ENCODE measurements at regions of chr3 and their contacts with region 1.

Region 1: GRCh38 chr3:11719406-11720230 is 75.9 kb upstream of the VGLL4 start:
- DNase-seq: peak; percentile 76
- ATAC-seq: peak; percentile 69
- H3K4me3 Mint-ChIP-seq: peak overlapping the region; percentile 94
- H3K27ac Mint-ChIP-seq: no peak overlapping the region
- H3K4me1 Mint-ChIP-seq: peaks cover 21% of the 10 kb centered on the region
- H3K27me3 Mint-ChIP-seq: no peaks in the 10 kb centered on the region
- CTCF ChIP-seq: no peak

Region 2: DNA sequence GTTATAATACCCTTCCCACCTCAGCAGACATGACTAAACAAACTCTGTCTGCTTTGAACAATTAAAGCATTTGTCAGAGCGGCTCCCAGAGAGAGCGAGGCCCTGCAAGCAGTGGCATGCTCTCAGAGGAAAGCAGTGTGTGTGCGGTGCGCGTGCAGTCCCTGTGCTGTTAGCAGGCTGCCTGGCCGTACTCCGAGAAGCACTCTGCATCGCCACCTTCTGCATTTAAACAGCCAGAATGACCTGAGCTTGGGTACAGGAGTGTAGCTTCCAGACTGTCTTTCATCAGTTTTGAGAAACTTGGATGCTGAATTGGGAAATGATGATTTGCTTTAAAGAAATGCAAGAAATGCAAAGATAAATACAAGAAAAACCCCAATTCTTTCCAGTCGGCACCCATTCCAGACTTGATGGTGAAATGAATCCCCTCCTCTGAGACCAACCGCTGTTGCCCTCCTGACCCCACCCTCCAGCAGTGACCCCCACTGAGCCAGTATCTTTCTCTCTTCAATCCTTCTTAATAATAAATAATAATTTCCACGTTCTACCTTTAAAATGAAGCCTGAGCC is 189.4 kb before region 1 on chr3:
- CTCF ChIA-PET with region 1: no interaction called
- POLR2A ChIA-PET with region 1: no interaction called
- intact Hi-C with region 1: no loop called
- DNase-seq: no peak
- ATAC-seq: no peak
- H3K4me3 Mint-ChIP-seq: no peak overlapping the region
- H3K27ac Mint-ChIP-seq: no peak overlapping the region
- H3K4me1 Mint-ChIP-seq: no peaks in the 10 kb centered on the region
- H3K27me3 Mint-ChIP-seq: no peaks in the 10 kb centered on the region
- CTCF ChIP-seq: no peak

Region 3: GRCh38 chr3:11671648-11672100 is 47.9 kb before region 1 on chr3:
- CTCF ChIA-PET with region 1: no interaction called
- POLR2A ChIA-PET with region 1: no interaction called
- intact Hi-C with region 1: loop called (anchors 5 kb)
- DNase-seq: no peak
- ATAC-seq: peak; percentile 47
- H3K4me3 Mint-ChIP-seq: no peak overlapping the region
- H3K27ac Mint-ChIP-seq: no peak overlapping the region
- H3K4me1 Mint-ChIP-seq: peaks cover 22% of the 10 kb centered on the region
- H3K27me3 Mint-ChIP-seq: no peaks in the 10 kb centered on the region
- CTCF ChIP-seq: no peak

Region 4: DNA sequence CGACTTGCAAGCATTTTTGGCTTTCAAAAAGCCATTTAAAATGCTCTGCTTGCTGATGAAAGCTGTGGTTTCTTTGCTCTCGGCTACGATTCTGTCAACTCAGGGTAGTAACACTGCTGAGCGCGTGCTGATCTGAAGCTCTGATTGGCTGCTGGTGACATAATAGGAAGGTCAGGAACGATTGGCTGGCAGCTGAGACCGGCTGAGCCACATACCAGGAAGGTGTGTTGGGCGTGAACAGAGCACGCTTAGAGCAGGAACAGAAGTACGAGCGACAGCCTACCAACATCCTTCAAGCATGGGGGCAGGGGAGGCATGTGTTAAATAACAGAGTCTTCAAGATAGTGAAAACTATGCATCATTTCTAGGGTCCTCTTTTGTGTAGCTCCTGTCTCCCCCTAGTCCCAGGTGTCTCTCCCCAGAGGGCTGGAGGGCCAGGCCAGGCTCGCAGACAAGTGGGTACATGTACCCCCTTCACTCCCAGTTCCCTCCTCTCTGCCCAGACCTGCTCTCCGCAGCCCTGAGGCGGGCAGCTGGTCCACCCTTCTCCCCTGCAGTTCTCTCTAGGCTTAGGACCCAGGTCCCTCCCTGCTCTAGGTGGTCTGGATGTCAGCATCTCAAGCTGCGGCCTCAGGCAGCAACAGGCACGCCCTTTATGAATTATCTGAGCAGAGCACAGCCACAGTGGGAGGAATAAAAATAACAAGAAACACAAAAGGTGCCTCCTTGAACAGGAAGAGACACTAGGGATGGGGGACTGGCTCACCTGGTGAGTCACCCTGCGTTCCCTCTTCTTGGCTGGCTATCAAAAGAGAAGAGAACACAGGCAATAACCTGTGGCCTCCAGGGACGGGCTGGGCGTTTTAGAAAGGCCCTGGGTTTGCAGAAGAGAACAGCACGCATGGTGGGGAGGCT is 51.1 kb after region 1 on chr3:
- CTCF ChIA-PET with region 1: no interaction called
- POLR2A ChIA-PET with region 1: no interaction called
- intact Hi-C with region 1: loop called (anchors 5 kb)
- DNase-seq: peak; percentile 20
- ATAC-seq: peak; percentile 100
- H3K4me3 Mint-ChIP-seq: peak overlapping the region; percentile 21
- H3K27ac Mint-ChIP-seq: peak overlapping the region; percentile 3
- H3K4me1 Mint-ChIP-seq: peaks cover 16% of the 10 kb centered on the region
- H3K27me3 Mint-ChIP-seq: no peaks in the 10 kb centered on the region
- CTCF ChIP-seq: no peak

Region 5: GRCh38 chr3:11803977-11804892 is 84.6 kb after region 1 on chr3:
- CTCF ChIA-PET with region 1: no interaction called
- POLR2A ChIA-PET with region 1: no interaction called
- intact Hi-C with region 1: loop called (anchors 5 kb)
- DNase-seq: no peak
- ATAC-seq: peak; percentile 71
- H3K4me3 Mint-ChIP-seq: no peak overlapping the region
- H3K27ac Mint-ChIP-seq: no peak overlapping the region
- H3K4me1 Mint-ChIP-seq: no peaks in the 10 kb centered on the region
- H3K27me3 Mint-ChIP-seq: no peaks in the 10 kb centered on the region
- CTCF ChIP-seq: no peak

Region 6: GRCh38 chr3:11846281-11847034 is 126.8 kb after region 1 on chr3 and contains the start of gene TAMM41:
- CTCF ChIA-PET with region 1: no interaction called
- POLR2A ChIA-PET with region 1: no interaction called
- intact Hi-C with region 1: loop called (anchors 2 kb)
- DNase-seq: peak; percentile 77
- ATAC-seq: peak; percentile 100
- H3K4me3 Mint-ChIP-seq: peak within 1 kb of the TSS; percentile 99
- H3K27ac Mint-ChIP-seq: peak within 1 kb of the TSS; percentile 95
- H3K4me1 Mint-ChIP-seq: peaks cover 37% of the 10 kb centered on the region
- H3K27me3 Mint-ChIP-seq: no peaks in the 10 kb centered on the region
- CTCF ChIP-seq: no peak
- total RNA-seq, gene TAMM41: 28.1 and 39.0 TPM in 2 replicates

Measured in activated B cell treated with CpG ODN at 0.5 μM for 24 hours (primary cell).